ENCODE measurements at regions of chr5 and their contacts with region 1.

Region 1: GRCh38 chr5:145834917-145835847 is at the start of gene PRELID2:
- DNase-seq: peak; percentile 96
- H3K4me3 Mint-ChIP-seq: peak within 1 kb of the TSS; percentile 76
- H3K27ac Mint-ChIP-seq: peak within 1 kb of the TSS; percentile 40
- H3K4me1 Mint-ChIP-seq: peaks cover 73% of the 10 kb centered on the region
- H3K27me3 Mint-ChIP-seq: no peaks in the 10 kb centered on the region
- CTCF ChIP-seq: no peak
- total RNA-seq, gene PRELID2: 33.2 and 33.4 TPM in 2 replicates

Region 2: DNA sequence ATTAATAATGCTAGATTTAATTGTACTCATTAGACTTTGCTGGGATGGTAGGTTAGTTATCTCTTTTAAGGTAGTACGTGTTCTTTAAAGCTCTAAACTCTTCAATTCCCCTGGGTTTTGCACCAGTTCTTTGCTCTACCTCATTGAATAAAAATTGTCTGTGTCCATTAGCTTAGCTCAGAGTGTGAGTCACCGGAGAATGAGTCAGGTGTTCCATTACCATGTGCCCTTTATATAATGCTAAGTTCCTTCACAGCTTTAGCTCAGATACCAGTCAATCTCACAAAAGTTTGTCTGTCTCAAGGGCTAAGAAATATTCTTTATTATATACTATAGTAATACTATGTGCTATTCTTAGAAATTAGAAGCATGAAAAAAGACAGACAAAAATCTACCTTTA is 339.4 kb before region 1 on chr5:
- CTCF ChIA-PET with region 1: no interaction called
- intact Hi-C with region 1: loop called (anchors 10 kb)
- DNase-seq: peak; percentile 71
- H3K4me3 Mint-ChIP-seq: no peak overlapping the region
- H3K27ac Mint-ChIP-seq: peak overlapping the region; percentile 93
- H3K4me1 Mint-ChIP-seq: peaks cover 51% of the 10 kb centered on the region
- H3K27me3 Mint-ChIP-seq: no peaks in the 10 kb centered on the region
- CTCF ChIP-seq: no peak

Region 3: DNA sequence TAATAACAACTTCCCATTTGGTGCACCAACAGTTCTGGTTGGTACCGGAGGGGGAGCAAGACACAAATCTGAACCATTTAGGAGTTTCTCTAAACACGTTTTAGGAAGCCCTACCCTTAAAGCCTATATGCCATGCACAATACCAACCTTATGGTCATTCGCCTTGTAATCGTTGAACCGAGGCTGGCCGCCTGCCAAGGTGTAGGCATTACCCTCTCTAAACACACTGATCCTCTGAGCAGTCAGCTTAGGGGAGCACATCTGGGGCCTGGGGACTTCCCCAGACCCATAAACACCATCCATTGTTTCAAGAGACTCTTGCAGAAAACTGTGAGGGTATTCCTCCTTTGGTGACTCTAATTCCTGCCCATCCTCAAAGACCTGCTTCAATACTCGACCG is 37.3 kb after region 1 on chr5:
- CTCF ChIA-PET with region 1: no interaction called
- intact Hi-C with region 1: no loop called
- DNase-seq: no peak
- H3K4me3 Mint-ChIP-seq: no peak overlapping the region
- H3K27ac Mint-ChIP-seq: no peak overlapping the region
- H3K4me1 Mint-ChIP-seq: no peaks in the 10 kb centered on the region
- H3K27me3 Mint-ChIP-seq: no peaks in the 10 kb centered on the region
- CTCF ChIP-seq: no peak

Region 4: DNA sequence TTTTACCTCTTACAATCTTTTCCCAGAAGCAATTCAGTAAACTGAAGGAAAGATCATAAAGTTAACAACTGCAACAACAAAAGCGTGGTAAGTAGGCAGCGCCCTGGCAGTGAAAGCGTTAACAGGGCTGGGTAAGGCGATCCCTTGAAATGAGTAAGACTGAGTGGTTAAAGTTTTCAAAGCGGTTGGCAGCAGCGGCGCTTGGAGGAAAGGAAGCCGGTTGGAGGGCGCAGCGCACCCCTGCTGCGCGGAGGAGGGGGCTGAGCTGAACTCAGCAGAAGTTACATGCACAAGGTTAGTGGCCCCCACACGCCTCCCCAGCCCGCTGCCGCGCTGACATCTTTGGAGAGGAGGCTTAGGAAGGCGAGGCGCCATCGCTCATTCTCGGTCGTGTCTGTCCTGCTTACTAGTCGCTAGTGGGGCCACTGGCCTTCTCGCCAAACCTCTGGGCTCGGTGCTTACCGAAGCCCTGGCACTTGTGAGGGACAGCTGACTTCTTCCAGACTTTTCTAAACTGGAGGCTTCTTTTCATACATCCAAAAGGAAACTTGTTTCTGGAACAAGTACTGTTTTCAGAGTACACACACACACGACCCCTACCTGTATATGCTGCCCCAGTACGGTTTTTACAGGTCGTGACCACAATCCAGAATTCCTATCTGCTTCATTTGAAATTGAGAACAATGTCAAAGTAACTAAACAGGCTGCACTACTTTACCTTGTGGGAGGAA is 101.4 kb after region 1 on chr5 and contains the start of gene SH3RF2:
- CTCF ChIA-PET with region 1: no interaction called
- intact Hi-C with region 1: loop called (anchors 2 kb)
- DNase-seq: peak; percentile 76
- H3K4me3 Mint-ChIP-seq: peak within 1 kb of the TSS; percentile 76
- H3K27ac Mint-ChIP-seq: peak within 1 kb of the TSS; percentile 73
- H3K4me1 Mint-ChIP-seq: peaks cover 73% of the 10 kb centered on the region
- H3K27me3 Mint-ChIP-seq: no peaks in the 10 kb centered on the region
- CTCF ChIP-seq: no peak
- total RNA-seq, gene SH3RF2: 21.9 and 25.1 TPM in 2 replicates